ENCODE measurements at regions of chr3 and their contacts with region 1.

Region 1: DNA sequence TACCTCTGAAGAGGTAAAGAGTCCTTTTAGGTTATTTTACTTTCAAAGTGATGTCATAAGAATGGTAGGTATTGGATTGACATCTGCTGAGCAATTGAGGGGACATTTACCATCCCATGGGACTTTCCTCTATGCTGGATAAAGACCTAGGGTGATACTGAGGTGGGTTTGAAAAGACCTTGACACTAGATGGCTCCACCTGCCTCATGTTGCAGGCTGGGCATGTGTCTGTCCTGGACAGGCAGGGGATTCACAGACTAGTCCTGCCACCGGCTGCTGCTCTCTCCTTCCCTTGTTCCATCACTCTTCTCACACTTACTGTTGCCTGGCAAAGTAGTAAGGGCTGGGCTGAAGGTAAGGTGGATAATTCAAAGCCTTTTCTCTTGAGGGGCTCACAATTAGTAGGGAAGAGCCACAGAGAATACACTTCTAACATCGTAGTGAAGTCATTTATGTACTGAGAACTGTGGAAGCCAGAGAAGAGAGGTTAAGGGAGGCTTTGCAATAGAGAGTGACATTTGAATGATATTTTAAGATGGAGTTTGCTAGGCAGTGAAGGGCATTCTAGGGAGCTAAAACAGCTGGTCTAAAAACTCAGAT is 27.7 kb downstream of the TRAK1 start:
- DNase-seq: peak; percentile 71
- ATAC-seq: peak; percentile 89
- H3K4me3 ChIP-seq: no peak overlapping the region
- H3K27ac ChIP-seq: peak overlapping the region; percentile 71
- H3K4me1 ChIP-seq: peaks cover 48% of the 10 kb centered on the region
- H3K27me3 ChIP-seq: no peaks in the 10 kb centered on the region
- CTCF ChIP-seq: peak; percentile 54 to 93 (median 75); a peak in 5 of 6 replicates
- EP300 ChIP-seq: no peak
- POLR2A ChIP-seq: no peak
- RAD21 ChIP-seq: peak; percentile 86

Region 2: GRCh38 chr3:40337136-40338108 is 1781.4 kb before region 1 on chr3:
- CTCF ChIA-PET with region 1: no interaction called
- POLR2A ChIA-PET with region 1: no interaction called
- RAD21 ChIA-PET with region 1: no interaction called
- SMC1A ChIA-PET with region 1: no interaction called
- in situ Hi-C with region 1: loop called (anchors 25 kb)
- intact Hi-C with region 1: no loop called
- DNase-seq: no peak
- ATAC-seq: peak; percentile 89
- H3K4me3 ChIP-seq: no peak overlapping the region
- H3K27ac ChIP-seq: peak overlapping the region; percentile 37; the same call in 1 of the 2 replicates
- H3K4me1 ChIP-seq: peaks cover 14% of the 10 kb centered on the region
- H3K27me3 ChIP-seq: no peaks in the 10 kb centered on the region
- CTCF ChIP-seq: no peak
- EP300 ChIP-seq: 0 out of 4 replicates have a peak, but pooled peaks of 1 of the 2 experiments have one; percentile 22
- POLR2A ChIP-seq: no peak
- RAD21 ChIP-seq: no peak

Region 3: GRCh38 chr3:41863024-41863423 is 255.8 kb before region 1 on chr3:
- CTCF ChIA-PET with region 1: no interaction called
- POLR2A ChIA-PET with region 1: no interaction called
- RAD21 ChIA-PET with region 1: no interaction called
- SMC1A ChIA-PET with region 1: no interaction called
- in situ Hi-C with region 1: no loop called
- intact Hi-C with region 1: no loop called
- DNase-seq: no peak
- ATAC-seq: peak; percentile 62
- H3K4me3 ChIP-seq: no peak overlapping the region
- H3K27ac ChIP-seq: no peak overlapping the region
- H3K4me1 ChIP-seq: no peaks in the 10 kb centered on the region
- H3K27me3 ChIP-seq: no peaks in the 10 kb centered on the region
- CTCF ChIP-seq: 0 out of 6 replicates have a peak, but pooled peaks of 1 of the 3 experiments have one; percentile 10
- EP300 ChIP-seq: no peak
- POLR2A ChIP-seq: no peak
- RAD21 ChIP-seq: no peak

Region 4: DNA sequence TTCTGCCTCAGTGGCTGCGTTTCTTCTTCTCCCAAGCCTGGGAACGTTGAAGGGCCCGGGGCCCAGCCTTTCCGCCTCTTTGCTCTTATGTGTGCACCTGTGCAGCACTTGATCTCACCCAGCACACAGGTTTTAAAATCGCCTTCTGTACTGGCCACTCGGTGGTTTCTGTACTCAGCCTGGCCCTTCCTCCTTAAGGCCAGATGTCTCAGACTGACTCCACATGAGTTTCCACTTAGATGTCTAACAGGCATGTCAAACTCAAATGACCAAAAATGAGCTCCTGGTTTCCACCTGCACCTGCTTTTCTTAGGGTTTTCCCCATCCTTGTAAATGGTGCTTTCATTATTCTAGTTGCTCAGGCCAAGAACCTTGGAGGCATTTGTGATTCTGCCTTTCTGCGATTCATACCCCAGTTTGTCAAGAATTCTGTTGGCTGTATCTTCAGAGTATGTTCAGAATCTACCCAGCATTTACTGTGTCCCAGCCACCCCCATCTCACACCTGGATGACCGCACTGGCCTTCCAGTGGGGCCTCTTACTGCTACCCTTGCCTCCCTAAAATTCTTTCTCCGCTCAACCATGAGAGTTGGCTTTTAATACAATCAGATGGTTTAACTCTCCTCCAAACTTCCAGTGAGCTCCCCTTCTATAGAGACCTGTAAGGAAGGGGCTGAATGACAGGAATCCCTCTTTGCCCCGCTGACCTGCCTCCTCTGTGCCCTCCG is 29.9 kb before region 1 on chr3:
- CTCF ChIA-PET with region 1: no interaction called
- POLR2A ChIA-PET with region 1: no interaction called
- RAD21 ChIA-PET with region 1: no interaction called
- SMC1A ChIA-PET with region 1: no interaction called
- in situ Hi-C with region 1: no loop called
- intact Hi-C with region 1: no loop called
- DNase-seq: no peak
- ATAC-seq: peak; percentile 48
- H3K4me3 ChIP-seq: no peak overlapping the region
- H3K27ac ChIP-seq: peak overlapping the region; percentile 38
- H3K4me1 ChIP-seq: peaks cover 80% of the 10 kb centered on the region
- H3K27me3 ChIP-seq: no peaks in the 10 kb centered on the region
- CTCF ChIP-seq: no peak
- EP300 ChIP-seq: no peak
- POLR2A ChIP-seq: no peak
- RAD21 ChIP-seq: no peak

Region 5: GRCh38 chr3:42184651-42185443 is 66.0 kb after region 1 on chr3:
- CTCF ChIA-PET with region 1: interaction called, 159 read pairs
- POLR2A ChIA-PET with region 1: no interaction called
- RAD21 ChIA-PET with region 1: interaction called, 64 read pairs
- SMC1A ChIA-PET with region 1: interaction called, 4 read pairs
- in situ Hi-C with region 1: no loop called
- intact Hi-C with region 1: no loop called
- DNase-seq: no peak
- ATAC-seq: no peak
- H3K4me3 ChIP-seq: no peak overlapping the region
- H3K27ac ChIP-seq: no peak overlapping the region
- H3K4me1 ChIP-seq: no peaks in the 10 kb centered on the region
- H3K27me3 ChIP-seq: no peaks in the 10 kb centered on the region
- CTCF ChIP-seq: no peak
- EP300 ChIP-seq: no peak
- POLR2A ChIP-seq: no peak
- RAD21 ChIP-seq: no peak

Region 6: DNA sequence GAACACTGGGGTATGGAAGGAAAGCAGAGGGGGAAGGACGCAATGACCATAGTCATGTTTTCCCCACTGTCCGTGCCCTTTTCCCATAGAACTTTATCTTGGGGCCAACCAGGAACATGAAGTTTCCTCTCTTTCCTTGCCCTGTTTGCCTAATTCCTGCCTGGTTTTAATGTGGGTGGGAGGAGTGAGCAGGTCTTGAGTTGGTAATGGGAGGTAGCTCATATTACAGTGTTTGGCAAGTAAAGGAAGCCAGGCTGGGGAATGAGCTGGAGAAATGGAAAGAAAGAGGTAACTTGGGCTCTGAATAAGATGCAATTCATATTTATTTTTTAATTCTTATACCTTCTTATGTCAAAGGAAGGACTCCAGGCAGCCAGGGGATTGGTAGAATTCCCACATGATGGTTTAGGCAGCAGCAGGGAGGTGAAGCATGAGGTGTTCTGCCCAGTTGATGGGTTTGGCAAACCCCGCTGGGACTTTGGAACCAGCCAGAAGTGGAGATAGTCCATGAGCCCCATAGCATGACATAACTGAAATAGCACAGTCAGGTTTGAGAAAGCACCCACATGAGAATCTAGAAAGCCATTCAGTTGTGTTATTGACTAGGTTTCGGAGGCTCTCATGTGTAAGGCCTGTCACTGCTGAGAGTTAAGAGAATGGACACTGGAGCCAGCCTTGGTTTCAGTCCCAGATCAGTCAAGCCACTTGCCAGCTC is 87.1 kb after region 1 on chr3:
- CTCF ChIA-PET with region 1: interaction called, 3 read pairs
- POLR2A ChIA-PET with region 1: no interaction called
- RAD21 ChIA-PET with region 1: no interaction called
- SMC1A ChIA-PET with region 1: interaction called, 12 read pairs
- in situ Hi-C with region 1: no loop called
- intact Hi-C with region 1: no loop called
- DNase-seq: peak; percentile 85
- ATAC-seq: peak; percentile 97
- H3K4me3 ChIP-seq: no peak overlapping the region
- H3K27ac ChIP-seq: peak overlapping the region; percentile 57
- H3K4me1 ChIP-seq: peaks cover 27% of the 10 kb centered on the region
- H3K27me3 ChIP-seq: no peaks in the 10 kb centered on the region
- CTCF ChIP-seq: no peak
- EP300 ChIP-seq: no peak; a peak in 1 of 4 replicates
- POLR2A ChIP-seq: no peak
- RAD21 ChIP-seq: no peak

Region 7: GRCh38 chr3:42443819-42444436 is 325.1 kb after region 1 on chr3:
- CTCF ChIA-PET with region 1: interaction called, 6 read pairs
- POLR2A ChIA-PET with region 1: no interaction called
- RAD21 ChIA-PET with region 1: no interaction called
- SMC1A ChIA-PET with region 1: interaction called, 9 read pairs
- in situ Hi-C with region 1: loop called (anchors 5 kb)
- intact Hi-C with region 1: loop called (anchors 1 kb)
- DNase-seq: peak; percentile 30
- ATAC-seq: peak; percentile 99
- H3K4me3 ChIP-seq: no peak overlapping the region
- H3K27ac ChIP-seq: no peak overlapping the region
- H3K4me1 ChIP-seq: no peaks in the 10 kb centered on the region; the same call in 1 of the 2 replicates
- H3K27me3 ChIP-seq: no peaks in the 10 kb centered on the region; a peak in 1 of 4 replicates
- CTCF ChIP-seq: peak; percentile 93 to 97 (median 95)
- EP300 ChIP-seq: no peak
- POLR2A ChIP-seq: no peak
- RAD21 ChIP-seq: peak; percentile 95